HCT116 (cell line): ENCODE measurements at regions of chr9 and their contacts with region 1.

Region 1: GRCh38 chr9:114291064-114291474 is 31.8 kb upstream of the ORM1 start:
- DNase-seq: peak; percentile 51
- ATAC-seq: peak; percentile 85
- H3K4me3 ChIP-seq: no peak overlapping the region
- H3K27ac ChIP-seq: no peak overlapping the region
- H3K4me1 ChIP-seq: no peaks in the 10 kb centered on the region
- H3K27me3 ChIP-seq: no peaks in the 10 kb centered on the region
- CTCF ChIP-seq: peak; percentile 80 to 95 (median 95)
- POLR2A ChIP-seq: no peak
- RAD21 ChIP-seq: peak; percentile 95

Region 2: DNA sequence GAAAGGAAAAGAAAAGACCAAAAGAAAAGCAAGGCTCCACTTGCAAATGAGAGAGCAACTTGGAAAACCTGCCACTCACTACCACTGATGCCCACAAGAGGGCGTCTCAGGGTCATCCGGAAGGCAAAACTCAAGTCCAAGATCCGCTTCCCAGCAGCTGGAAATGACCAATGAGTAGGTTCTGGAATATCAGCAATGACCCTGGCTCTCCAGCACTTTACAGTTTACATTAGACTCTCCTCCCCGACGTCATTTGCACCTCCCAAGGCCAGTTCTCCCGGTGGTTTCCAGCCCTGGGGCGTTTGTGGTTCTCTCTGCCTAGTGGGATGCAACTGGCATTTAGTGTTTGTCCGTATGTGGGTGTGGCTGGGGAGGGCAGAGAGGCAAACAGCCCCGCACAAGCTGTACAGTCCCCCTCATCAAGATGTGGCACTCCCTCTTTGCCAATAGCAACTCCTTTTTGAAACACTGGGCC is 608.7 kb before region 1 on chr9:
- CTCF ChIA-PET with region 1: interaction called, 10 read pairs
- POLR2A ChIA-PET with region 1: no interaction called
- RAD21 ChIA-PET with region 1: no interaction called
- intact Hi-C with region 1: no loop called
- DNase-seq: peak; percentile 83
- ATAC-seq: peak; percentile 85
- H3K4me3 ChIP-seq: peak overlapping the region in 1 of 2 experiments; percentile 24; a peak in 2 of 4 replicates
- H3K27ac ChIP-seq: no peak overlapping the region
- H3K4me1 ChIP-seq: peaks cover 0 to 6% of the 10 kb centered on the region in 2 experiments; a peak in 2 of 4 replicates
- H3K27me3 ChIP-seq: peaks cover 15% of the 10 kb centered on the region
- CTCF ChIP-seq: peak; percentile 74 to 96 (median 93)
- POLR2A ChIP-seq: no peak
- RAD21 ChIP-seq: peak; percentile 89

Region 3: DNA sequence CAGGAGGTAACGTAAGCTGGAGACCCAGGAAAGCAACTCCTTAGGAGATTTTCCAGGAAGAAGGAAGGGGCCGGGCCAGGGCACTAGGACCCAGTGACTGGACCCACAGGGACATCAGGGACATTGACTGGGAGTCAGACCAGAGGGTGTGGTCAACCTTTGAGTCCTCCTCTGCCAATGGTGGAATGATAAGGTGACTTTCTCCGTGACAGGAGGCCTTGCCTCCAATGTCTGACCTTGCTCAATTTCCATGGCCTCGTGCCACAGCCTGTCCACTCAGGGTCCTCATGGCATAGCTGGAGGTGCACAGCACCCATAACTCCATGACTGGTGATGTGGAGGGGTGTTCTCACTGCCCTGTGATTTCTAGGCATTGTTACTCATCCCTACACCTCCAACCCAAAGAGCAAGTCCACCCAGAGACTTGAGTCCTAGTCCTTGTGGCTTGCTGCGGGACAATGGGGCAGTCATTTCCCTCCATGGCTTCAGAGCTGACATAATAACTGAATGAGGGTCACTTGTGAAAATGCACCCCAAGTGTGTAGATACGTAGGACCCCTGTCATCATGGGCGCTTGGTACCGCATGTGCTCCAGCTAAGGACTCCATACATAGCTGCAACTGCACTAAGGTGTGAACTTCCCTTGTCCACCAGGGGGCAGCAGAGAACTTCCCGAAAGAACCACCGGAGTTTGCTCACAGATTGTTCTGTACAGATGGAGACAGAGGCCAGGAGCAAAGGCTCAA is 208.9 kb before region 1 on chr9:
- CTCF ChIA-PET with region 1: interaction called, 41 read pairs
- POLR2A ChIA-PET with region 1: no interaction called
- RAD21 ChIA-PET with region 1: interaction called, 8 to 16 read pairs
- intact Hi-C with region 1: loop called (anchors 1 kb)
- DNase-seq: peak; percentile 70
- ATAC-seq: peak; percentile 97
- H3K4me3 ChIP-seq: no peak overlapping the region
- H3K27ac ChIP-seq: no peak overlapping the region
- H3K4me1 ChIP-seq: no peaks in the 10 kb centered on the region
- H3K27me3 ChIP-seq: no peaks in the 10 kb centered on the region
- CTCF ChIP-seq: peak; percentile 86 to 91 (median 87)
- POLR2A ChIP-seq: no peak
- RAD21 ChIP-seq: peak; percentile 91

Region 4: GRCh38 chr9:114155263-114155972 is 135.7 kb before region 1 on chr9 and contains the start of gene COL27A1:
- CTCF ChIA-PET with region 1: interaction called, 17 read pairs
- POLR2A ChIA-PET with region 1: no interaction called
- RAD21 ChIA-PET with region 1: interaction called in 1 of 2 experiments, 4 read pairs
- intact Hi-C with region 1: loop called (anchors 1 kb)
- DNase-seq: peak; percentile 19
- ATAC-seq: peak; percentile 92
- H3K4me3 ChIP-seq: peak within 1 kb of the TSS; percentile 54 to 62
- H3K27ac ChIP-seq: peak within 1 kb of the TSS; percentile 31; the same call in 1 of the 2 replicates
- H3K4me1 ChIP-seq: peaks cover 0 to 12% of the 10 kb centered on the region in 2 experiments; a peak in 3 of 4 replicates
- H3K27me3 ChIP-seq: no peaks in the 10 kb centered on the region
- CTCF ChIP-seq: peak; percentile 88 to 89 (median 88)
- POLR2A ChIP-seq: no peak
- RAD21 ChIP-seq: peak; percentile 85
- total RNA-seq, gene COL27A1: 12.0 TPM